ENCODE measurements at regions of chr5 and their contacts with region 1.

Region 1: DNA sequence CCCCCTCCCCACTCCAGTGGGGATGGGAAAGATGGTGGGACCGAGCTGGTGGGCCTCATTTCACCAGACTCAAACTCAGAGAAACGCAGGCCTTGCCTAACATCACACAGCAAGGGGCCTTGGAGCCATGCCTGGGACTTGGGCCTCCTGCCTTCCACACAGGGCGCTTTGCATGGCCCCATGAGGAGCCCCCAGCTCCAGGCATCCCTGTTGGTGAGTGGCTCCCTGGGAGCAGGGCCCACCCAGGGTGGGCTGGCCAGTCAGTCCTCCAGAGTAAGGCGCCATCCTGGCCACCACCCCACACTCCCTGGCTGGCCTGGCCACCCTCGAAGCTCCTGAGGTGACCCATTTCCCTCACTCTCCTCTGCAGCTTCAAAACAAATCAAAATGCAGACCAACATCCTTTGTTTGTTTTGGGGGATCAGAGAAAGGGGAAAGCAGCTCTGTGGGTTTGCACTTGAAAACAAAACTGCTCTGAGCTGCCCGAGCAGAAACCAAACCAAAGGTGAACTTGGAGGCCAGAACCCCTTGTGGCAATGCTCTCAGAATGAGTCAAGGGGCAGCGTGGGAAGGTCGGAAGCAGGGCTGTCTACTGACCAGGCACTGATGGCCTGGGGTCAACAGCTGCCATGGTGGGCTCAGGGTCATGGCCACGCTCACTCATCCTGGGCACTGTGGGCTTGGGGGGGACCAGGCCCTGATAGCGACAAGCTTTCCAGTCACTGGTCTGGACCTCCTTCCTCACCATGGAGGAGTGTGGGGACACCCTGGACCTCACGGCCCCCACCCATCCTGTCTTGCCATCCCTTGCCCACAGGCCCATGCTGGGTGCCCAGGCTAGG is 37.0 kb upstream of the VDAC1 start:
- DNase-seq: no peak
- H3K4me3 ChIP-seq: no peak overlapping the region
- H3K27ac ChIP-seq: no peak overlapping the region
- H3K4me1 ChIP-seq: no peaks in the 10 kb centered on the region
- H3K27me3 ChIP-seq: peaks cover 0 to 2% (median 0%) of the 10 kb centered on the region in 5 experiments

Region 2: DNA sequence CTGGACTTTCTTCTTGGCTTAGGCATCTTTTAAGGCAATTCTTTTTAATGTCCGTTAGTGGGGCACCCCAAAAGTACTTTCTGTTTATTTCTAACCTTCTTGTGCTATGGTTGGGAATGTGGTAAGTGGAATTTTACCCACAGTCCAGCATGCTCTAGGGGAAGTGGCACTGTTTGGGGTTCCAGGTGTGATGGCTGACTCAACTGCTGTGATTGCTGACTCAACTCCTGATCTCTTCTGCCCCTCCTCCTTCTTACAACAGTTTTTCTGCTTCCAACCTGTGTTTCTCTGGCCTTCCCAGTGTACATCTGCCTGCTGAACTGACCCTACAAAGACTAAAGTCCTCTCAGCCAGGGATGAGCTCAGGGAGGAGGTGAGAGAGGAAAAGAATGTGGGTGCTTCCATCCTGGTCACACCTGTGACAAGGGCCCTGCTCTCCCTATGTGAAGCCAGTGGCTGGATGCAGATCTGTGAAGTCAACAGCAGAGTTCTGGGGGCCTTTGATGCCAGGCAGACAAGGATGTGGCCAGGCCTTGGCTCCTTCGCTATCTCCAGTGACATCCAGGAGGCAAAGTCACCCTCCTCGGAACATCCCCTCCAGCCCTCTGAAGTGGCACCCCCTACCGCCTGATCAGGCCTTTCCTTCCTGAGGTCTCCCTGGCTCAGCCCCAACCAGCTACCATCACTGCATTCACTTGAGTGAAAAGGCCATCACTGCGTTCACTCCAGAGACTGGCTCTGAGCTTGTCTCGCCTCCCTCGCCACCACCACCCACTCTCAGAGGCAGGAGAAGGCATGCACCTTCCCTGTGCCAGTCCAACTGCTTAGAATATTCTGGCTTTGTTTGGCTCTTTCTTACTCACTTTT is 145.6 kb before region 1 on chr5:
- CTCF ChIA-PET with region 1: no interaction called
- POLR2A ChIA-PET with region 1: no interaction called
- DNase-seq: no peak
- H3K4me3 ChIP-seq: no peak overlapping the region
- H3K27ac ChIP-seq: no peak overlapping the region
- H3K4me1 ChIP-seq: no peaks in the 10 kb centered on the region
- H3K27me3 ChIP-seq: peaks cover 0 to 2% (median 0%) of the 10 kb centered on the region in 5 experiments

Region 3: GRCh38 chr5:134004592-134005375 is 37.0 kb before region 1 on chr5 and contains the start of gene VDAC1:
- CTCF ChIA-PET with region 1: interaction called, 14 read pairs
- POLR2A ChIA-PET with region 1: interaction called, 6 read pairs
- DNase-seq: peak; percentile 90 to 96 (median 93)
- H3K4me3 ChIP-seq: peak within 1 kb of the TSS; percentile 66 to 84 (median 73)
- H3K27ac ChIP-seq: peak within 1 kb of the TSS; percentile 75 to 91
- H3K4me1 ChIP-seq: peaks cover 4 to 36% (median 26%) of the 10 kb centered on the region in 4 experiments
- H3K27me3 ChIP-seq: no peaks in the 10 kb centered on the region

Region 4: DNA sequence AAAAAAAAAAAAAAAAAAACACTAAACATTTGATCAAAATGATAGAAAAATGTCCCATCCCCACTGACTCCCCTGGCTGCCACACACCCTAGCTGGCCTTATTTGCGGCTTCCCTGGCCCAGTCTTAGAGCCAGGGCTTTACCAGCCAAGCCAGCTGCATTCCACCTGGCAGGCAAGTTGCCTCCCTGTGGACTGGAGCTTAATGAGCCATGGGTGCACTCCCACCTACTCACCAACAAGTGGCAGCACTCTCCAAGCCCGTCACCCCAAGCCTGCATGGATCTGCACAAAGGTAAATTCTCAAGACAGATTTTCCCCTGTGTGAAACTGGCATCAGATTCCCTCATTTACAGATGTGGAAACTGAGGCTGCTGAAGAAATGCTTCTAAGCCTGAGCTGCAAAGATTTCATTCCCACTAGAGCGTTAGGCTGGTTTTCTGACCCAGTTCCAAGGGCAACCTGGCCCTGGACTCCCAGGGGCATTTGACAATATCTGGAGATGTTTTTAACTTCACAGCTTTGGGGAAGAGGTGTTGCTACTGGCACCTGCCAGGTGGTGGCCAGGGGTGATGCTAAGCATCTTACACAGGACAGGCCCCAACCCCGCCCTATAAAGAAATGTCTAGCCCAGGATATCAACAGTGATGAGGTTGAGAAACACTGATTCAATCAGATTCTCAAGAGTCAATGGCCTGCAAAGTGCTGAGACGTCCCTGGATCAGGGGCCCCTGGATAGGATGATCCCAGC is 15.1 kb before region 1 on chr5:
- CTCF ChIA-PET with region 1: interaction called, 26 read pairs
- POLR2A ChIA-PET with region 1: interaction called, 3 read pairs
- DNase-seq: peak; percentile 69 to 82 (median 82)
- H3K4me3 ChIP-seq: no peak overlapping the region
- H3K27ac ChIP-seq: no peak overlapping the region
- H3K4me1 ChIP-seq: no peaks in the 10 kb centered on the region
- H3K27me3 ChIP-seq: no peaks in the 10 kb centered on the region

Region 5: DNA sequence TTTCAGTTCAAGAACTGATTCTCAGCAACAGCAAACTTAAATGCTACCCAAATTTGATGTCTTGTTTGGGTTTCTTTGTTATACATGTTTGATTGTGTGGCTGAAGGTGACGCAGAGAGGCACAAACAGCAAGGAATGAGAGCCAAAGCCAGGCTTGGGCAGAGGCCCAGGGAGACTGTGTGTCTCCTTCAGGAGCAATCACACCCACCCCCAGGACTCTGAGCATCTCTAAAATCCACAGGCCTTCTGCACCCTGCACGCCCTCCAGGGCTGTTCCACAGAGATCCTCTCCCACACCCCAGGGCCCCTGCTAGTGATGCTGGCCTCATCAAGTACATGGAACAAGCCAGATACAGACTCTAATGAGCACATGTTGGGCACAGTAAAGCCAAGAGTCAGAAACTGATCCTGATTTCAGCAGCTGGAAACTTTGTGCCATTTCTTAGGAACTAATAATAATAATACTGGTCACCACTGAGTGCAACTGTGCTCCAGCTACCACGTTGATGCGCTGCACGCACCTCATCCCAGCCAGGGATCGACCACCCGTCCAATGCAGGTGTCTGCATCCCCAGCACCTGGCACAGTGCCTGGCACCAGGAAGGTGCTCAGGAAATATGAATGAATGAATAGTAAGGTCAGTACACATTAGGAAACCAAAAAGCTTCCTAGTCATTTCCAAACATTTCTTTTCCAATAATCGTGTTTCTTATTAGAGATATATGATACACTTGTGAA is 18.1 kb after region 1 on chr5:
- CTCF ChIA-PET with region 1: interaction called, 22 read pairs
- POLR2A ChIA-PET with region 1: no interaction called
- DNase-seq: no peak
- H3K4me3 ChIP-seq: no peak overlapping the region
- H3K27ac ChIP-seq: no peak overlapping the region
- H3K4me1 ChIP-seq: peaks cover 0 to 2% (median 0%) of the 10 kb centered on the region in 4 experiments
- H3K27me3 ChIP-seq: no peaks in the 10 kb centered on the region

Region 6: GRCh38 chr5:134101686-134102439 is 60.1 kb after region 1 on chr5:
- CTCF ChIA-PET with region 1: interaction called, 14 read pairs
- POLR2A ChIA-PET with region 1: no interaction called
- DNase-seq: peak; percentile 59 to 79 (median 75)
- H3K4me3 ChIP-seq: peak overlapping the region in 1 of 7 experiments; percentile 45
- H3K27ac ChIP-seq: no peak overlapping the region
- H3K4me1 ChIP-seq: peaks cover 0 to 8% (median 2%) of the 10 kb centered on the region in 4 experiments
- H3K27me3 ChIP-seq: no peaks in the 10 kb centered on the region

Region 7: GRCh38 chr5:134145779-134146581 is 104.2 kb after region 1 on chr5:
- CTCF ChIA-PET with region 1: interaction called, 167 read pairs
- POLR2A ChIA-PET with region 1: interaction called, 8 read pairs
- DNase-seq: peak; percentile 60 to 85 (median 79)
- H3K4me3 ChIP-seq: no peak overlapping the region
- H3K27ac ChIP-seq: no peak overlapping the region
- H3K4me1 ChIP-seq: peaks cover 0 to 3% (median 2%) of the 10 kb centered on the region in 4 experiments
- H3K27me3 ChIP-seq: no peaks in the 10 kb centered on the region

Region 8: DNA sequence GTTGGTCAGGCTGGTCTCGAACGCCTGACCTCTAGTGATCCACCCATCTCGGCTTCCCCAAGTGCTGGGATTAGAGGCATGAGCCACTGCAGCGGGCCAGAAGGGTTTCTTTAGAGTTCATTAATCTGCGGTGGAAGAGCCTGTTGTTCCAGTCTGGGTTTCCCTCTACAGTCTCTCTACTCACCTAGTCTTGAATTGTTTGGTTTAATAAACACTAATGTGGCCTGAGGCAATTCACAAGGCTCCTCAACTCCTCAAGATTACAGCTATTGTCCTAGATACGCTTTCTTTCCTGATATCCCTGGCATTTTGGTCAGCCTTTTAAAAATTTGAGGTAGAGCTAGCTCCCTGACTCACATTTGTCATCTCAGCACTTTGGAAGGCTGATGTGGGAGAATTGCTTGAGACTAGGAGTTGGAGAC is 595.4 kb after region 1 on chr5:
- CTCF ChIA-PET with region 1: no interaction called
- POLR2A ChIA-PET with region 1: no interaction called
- DNase-seq: no peak
- H3K4me3 ChIP-seq: no peak overlapping the region
- H3K27ac ChIP-seq: no peak overlapping the region
- H3K4me1 ChIP-seq: peaks cover 0 to 2% (median under 1%) of the 10 kb centered on the region in 4 experiments
- H3K27me3 ChIP-seq: no peaks in the 10 kb centered on the region